Pancreas (tissue), 10 donors: ENCODE measurements at regions of chr10 and their contacts with region 1.

Region 1: DNA sequence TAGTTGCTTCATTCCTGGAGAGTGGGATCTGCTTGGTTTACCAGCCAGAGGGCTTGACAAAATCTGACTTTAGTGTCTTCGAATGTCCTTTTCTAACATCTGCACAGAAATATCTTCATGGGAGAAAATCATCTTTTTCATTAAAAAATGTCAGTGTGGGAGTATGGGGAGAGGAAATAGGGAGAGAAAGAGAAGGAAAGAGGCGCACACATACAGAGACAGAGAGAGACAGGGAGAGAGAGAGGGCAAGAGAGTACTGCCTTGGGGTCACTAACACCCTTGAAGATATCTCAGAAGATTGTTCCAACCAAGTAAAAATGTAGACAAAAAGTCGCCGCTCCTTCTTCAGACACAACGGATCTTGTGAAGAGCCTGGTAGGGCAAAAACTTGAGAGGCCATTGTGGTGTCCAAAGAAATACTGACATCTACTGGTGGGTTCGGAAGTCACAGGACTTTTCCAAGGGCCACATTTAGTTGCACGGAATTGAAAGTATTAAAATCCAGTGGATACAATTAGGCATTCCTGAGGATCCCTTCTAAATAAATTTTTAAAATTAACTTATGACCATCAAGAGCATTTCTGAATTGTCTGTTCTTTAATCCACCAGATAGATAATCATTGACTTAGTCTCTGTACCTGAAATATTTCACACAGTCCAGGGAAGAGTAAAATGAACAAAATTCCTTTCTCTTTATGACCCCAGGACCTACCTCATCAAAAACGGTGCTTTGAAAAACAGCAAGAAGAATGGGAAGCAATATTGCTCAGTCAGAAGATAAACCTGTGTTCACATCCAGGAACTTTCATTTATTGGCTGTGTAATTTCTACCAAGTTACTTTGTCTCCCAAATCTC is 29.7 kb downstream of the VIM start:
- DNase-seq: peak in 3 of 6 donors; percentile 35 to 71 (median 48)
- ATAC-seq: peak; percentile 89 to 99 (median 98)
- H3K4me3 ChIP-seq: no peak overlapping the region
- H3K27ac ChIP-seq: no peak overlapping the region
- H3K4me1 ChIP-seq: no peaks in the 10 kb centered on the region
- H3K27me3 ChIP-seq: no peaks in the 10 kb centered on the region
- CTCF ChIP-seq: peak; percentile 47 to 76 (median 70)

Region 2: GRCh38 chr10:16832351-16833080 is 425.2 kb before region 1 on chr10:
- intact Hi-C with region 1: loop called in 2 of 3 experiments (anchors 5 kb)
- DNase-seq: peak in 4 of 6 donors; percentile 43 to 61 (median 60)
- ATAC-seq: peak; percentile 44 to 75 (median 68)
- H3K4me3 ChIP-seq: no peak overlapping the region
- H3K27ac ChIP-seq: peak overlapping the region; percentile 5 to 92 (median 76)
- H3K4me1 ChIP-seq: peaks cover 4 to 26% (median 12%) of the 10 kb centered on the region in 3 donors
- H3K27me3 ChIP-seq: no peaks in the 10 kb centered on the region
- CTCF ChIP-seq: no peak

Region 3: GRCh38 chr10:16843252-16843870 is 414.3 kb before region 1 on chr10:
- intact Hi-C with region 1: loop called (anchors 5 to 10 kb)
- DNase-seq: no peak
- ATAC-seq: peak; percentile 77 to 99 (median 92)
- H3K4me3 ChIP-seq: no peak overlapping the region
- H3K27ac ChIP-seq: no peak overlapping the region
- H3K4me1 ChIP-seq: no peaks in the 10 kb centered on the region
- H3K27me3 ChIP-seq: no peaks in the 10 kb centered on the region
- CTCF ChIP-seq: peak; percentile 49 to 69 (median 58)

Region 4: DNA sequence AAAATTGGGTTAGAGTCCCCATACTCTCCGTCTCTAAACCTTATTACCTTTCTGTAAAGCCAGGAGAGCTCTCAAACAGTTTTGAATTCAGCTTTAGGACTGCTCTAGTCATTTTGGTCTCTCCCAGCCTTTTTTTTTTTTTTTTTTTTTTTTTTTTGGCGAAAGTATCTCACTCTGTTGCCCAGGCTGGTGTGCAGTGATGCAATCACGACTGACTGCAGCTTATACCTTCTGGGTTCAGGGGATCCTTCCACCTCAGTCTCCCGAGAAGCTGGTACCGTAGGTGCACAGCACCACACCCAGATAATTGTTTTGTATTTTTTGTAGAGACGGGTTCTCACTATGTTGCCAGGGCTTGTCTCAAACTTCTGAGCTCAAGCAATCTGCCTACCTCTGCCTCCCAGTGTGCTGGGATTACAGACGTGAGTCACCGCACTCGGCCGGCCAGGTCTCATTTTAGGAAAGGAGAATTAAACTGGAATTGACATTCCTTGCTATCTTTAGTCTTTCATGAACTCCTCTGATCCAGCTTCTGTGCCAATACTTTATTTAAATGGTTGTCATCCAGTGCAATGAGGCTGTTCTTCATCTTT is 409.0 kb before region 1 on chr10:
- intact Hi-C with region 1: loop called in 2 of 3 experiments (anchors 5 to 10 kb)
- DNase-seq: no peak
- ATAC-seq: no peak
- H3K4me3 ChIP-seq: no peak overlapping the region
- H3K27ac ChIP-seq: no peak overlapping the region
- H3K4me1 ChIP-seq: peaks cover 0 to 6% (median 0%) of the 10 kb centered on the region in 3 donors
- H3K27me3 ChIP-seq: no peaks in the 10 kb centered on the region
- CTCF ChIP-seq: no peak

Region 5: DNA sequence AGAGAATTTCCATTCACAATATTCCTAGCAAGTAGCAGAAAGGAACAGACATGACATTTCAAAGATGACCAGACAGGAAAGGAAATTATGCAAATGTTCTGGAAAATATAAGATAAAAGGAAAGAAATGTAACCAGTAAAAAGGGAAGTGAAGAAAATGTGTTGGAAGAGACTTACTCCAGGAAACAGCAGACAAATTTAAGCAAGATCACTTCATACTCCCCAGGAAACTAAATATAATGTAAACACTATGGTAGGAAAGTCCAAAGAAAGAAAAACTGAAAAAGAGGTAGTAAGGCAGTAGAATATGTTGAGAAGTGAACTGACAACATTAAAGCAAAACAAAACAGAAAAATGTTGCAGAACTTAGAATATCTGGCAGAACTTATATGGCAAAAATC is 203.1 kb after region 1 on chr10:
- intact Hi-C with region 1: no loop called
- DNase-seq: no peak
- ATAC-seq: no peak
- H3K4me3 ChIP-seq: no peak overlapping the region
- H3K27ac ChIP-seq: no peak overlapping the region
- H3K4me1 ChIP-seq: no peaks in the 10 kb centered on the region
- H3K27me3 ChIP-seq: peaks cover 0 to 12% (median 0%) of the 10 kb centered on the region in 4 donors
- CTCF ChIP-seq: no peak